AG04450 (cell line): ENCODE measurements at regions of chr6 and their contacts with region 1.

Region 1: DNA sequence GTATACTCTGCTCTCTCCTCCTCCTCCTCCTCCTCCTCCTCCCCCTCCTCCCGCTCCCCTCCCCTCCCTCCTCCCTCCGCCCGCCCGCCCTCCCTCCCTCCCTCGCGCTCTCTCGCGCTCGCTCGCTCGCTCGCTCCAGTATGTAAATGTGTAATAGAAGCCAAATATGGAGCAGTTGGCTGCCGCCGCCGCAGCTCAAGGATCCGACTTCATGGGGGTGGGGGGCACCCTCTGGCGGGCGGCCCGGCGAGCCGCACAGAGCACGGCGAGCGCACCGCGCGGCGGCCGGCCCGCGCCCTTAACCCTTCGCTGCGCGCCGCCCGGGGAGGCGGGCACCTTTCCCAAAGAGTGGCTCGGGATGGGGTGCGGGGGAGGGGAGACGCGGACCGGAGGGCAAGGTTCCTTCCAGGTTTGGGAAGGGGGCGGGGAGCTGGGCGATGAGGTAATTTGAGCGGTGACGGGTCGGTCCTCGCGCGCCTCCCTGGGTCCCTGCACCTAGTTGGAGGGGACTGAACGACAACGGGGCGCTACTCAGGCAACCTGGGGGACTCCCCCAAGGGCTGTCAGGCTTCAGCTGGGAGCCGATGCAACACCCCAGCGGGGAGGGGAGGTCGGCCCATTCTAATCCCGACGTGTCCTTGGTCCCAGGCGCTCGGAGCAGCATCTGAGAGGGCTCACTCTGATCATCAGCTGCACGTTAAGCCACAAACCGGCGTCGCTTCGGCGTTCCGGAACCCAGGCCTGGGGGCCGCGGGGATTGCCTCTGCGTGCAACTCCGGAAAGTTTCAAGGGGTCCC is 409 bp upstream of the ATXN1 start:
- DNase-seq: peak; percentile 80
- H3K4me3 ChIP-seq: peak overlapping the region; percentile 88
- H3K27ac ChIP-seq: peak overlapping the region; percentile 75
- H3K27me3 ChIP-seq: no peaks in the 10 kb centered on the region
- CTCF ChIP-seq: no peak; the same call in 1 of the 2 replicates

Region 2: DNA sequence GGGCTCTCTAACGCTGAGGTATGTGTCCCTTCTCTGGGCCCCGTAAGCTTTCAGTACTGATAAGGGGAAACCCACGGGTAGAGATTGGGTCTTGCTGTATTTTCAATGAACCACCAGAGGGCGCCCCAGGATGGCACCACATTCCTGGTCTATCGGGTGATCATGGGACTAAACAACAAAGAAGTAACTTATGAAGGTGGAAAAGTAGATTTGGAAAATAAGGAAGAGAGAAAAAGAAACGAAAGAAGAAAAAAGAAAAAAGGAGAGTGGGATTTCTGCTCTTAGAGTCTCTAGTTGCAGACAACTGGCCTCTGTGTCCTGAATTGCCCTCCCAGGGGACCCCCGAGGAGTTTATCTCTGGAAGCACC is 429.5 kb before region 1 on chr6:
- CTCF ChIA-PET with region 1: interaction called, 38 read pairs
- POLR2A ChIA-PET with region 1: interaction called, 5 read pairs
- DNase-seq: no peak
- H3K4me3 ChIP-seq: no peak overlapping the region
- H3K27ac ChIP-seq: no peak overlapping the region
- H3K27me3 ChIP-seq: no peaks in the 10 kb centered on the region
- CTCF ChIP-seq: peak; percentile 89

Region 3: GRCh38 chr6:16403831-16404230 is 357.8 kb before region 1 on chr6:
- CTCF ChIA-PET with region 1: interaction called, 11 read pairs
- POLR2A ChIA-PET with region 1: no interaction called
- DNase-seq: no peak
- H3K4me3 ChIP-seq: no peak overlapping the region
- H3K27ac ChIP-seq: no peak overlapping the region
- H3K27me3 ChIP-seq: no peaks in the 10 kb centered on the region
- CTCF ChIP-seq: peak; percentile 52

Region 4: DNA sequence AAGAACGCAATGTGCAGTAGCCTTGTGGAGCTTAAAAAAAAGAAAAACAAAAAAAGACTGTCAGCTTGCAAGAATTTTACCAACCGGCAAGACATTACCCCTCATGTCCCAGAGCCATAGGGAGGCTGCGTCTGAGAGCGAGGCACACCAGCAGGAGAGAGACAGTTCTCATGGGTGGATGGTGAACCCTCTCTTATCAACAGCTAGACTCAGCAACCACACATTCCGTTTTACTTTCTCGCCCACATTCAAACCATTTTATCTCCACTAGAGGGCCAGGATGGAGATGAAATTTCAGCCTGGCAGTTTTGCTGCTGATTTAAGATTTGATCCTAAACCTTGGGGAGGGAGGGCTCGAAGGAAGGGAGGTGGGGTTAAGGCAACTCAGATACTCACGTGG is 247.4 kb before region 1 on chr6:
- CTCF ChIA-PET with region 1: interaction called, 44 read pairs
- POLR2A ChIA-PET with region 1: interaction called, 3 read pairs
- DNase-seq: peak; percentile 32
- H3K4me3 ChIP-seq: no peak overlapping the region
- H3K27ac ChIP-seq: no peak overlapping the region
- H3K27me3 ChIP-seq: no peaks in the 10 kb centered on the region
- CTCF ChIP-seq: peak; percentile 67

Region 5: DNA sequence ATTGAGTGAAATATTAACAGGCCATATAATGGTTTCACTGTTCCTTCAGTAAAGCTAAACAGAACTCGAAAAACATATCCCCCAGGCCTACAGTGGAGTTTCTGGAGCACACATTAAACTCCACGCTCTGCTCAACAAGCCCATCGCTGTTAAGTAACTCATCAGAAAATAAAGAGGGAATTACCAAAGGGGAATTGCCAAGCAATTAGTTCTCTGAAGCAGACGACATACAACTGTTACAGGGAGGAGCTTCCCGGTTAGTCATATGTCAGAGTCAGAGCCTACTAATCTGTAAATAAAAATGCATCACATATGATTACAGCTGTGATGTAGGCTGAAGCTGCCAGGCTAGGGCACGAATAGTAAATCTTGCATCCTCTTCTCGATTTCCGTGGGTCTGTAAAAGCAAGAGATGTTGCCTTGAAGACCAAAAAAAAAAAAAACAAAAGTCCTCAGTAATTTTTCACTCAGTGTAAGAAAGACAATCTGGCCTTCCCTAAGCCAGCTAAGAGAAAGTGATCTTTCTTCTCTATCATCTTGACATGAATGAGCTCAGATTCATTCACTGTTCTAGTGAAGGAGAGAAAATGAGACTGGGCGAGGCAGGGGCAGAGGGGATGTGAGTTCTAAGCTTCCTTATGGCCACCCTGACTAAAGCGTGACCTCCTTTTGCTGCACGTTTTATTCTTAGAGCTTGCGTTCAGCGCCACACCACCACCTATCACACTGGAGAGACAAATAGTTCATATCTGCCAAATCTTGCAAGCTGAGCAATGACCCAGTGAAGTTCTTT is 14.2 kb before region 1 on chr6:
- CTCF ChIA-PET with region 1: interaction called, 13 read pairs
- POLR2A ChIA-PET with region 1: interaction called, 12 read pairs
- DNase-seq: no peak
- H3K4me3 ChIP-seq: no peak overlapping the region
- H3K27ac ChIP-seq: peak overlapping the region; percentile 53
- H3K27me3 ChIP-seq: no peaks in the 10 kb centered on the region
- CTCF ChIP-seq: no peak

Region 6: GRCh38 chr6:17086469-17086868 is 324.8 kb after region 1 on chr6:
- CTCF ChIA-PET with region 1: interaction called, 98 read pairs
- POLR2A ChIA-PET with region 1: interaction called, 3 read pairs
- DNase-seq: peak; percentile 50
- H3K4me3 ChIP-seq: no peak overlapping the region
- H3K27ac ChIP-seq: no peak overlapping the region
- H3K27me3 ChIP-seq: no peaks in the 10 kb centered on the region
- CTCF ChIP-seq: peak; percentile 74